Activated naive CD4-positive, alpha-beta T cell treated with anti-CD3 and anti-CD28 coated beads for 36 hours (primary cell): ENCODE measurements at regions of chr3 and their contacts with region 1.

Region 1: GRCh38 chr3:106401666-106402490 is 533.1 kb upstream of the CBLB start:
- DNase-seq: no peak
- H3K4me3 Mint-ChIP-seq: no peak overlapping the region
- H3K27ac Mint-ChIP-seq: no peak overlapping the region
- H3K4me1 Mint-ChIP-seq: no peaks in the 10 kb centered on the region
- H3K27me3 Mint-ChIP-seq: no peaks in the 10 kb centered on the region

Region 2: GRCh38 chr3:106355873-106356272 is 46.0 kb before region 1 on chr3:
- CTCF ChIA-PET with region 1: no interaction called
- intact Hi-C with region 1: loop called (anchors 5 kb)
- DNase-seq: no peak
- H3K4me3 Mint-ChIP-seq: no peak overlapping the region
- H3K27ac Mint-ChIP-seq: no peak overlapping the region
- H3K4me1 Mint-ChIP-seq: no peaks in the 10 kb centered on the region
- H3K27me3 Mint-ChIP-seq: no peaks in the 10 kb centered on the region